Dorsolateral prefrontal cortex (tissue), 120 donors: ENCODE measurements at regions of chr1 and their contacts with region 1.

Region 1: DNA sequence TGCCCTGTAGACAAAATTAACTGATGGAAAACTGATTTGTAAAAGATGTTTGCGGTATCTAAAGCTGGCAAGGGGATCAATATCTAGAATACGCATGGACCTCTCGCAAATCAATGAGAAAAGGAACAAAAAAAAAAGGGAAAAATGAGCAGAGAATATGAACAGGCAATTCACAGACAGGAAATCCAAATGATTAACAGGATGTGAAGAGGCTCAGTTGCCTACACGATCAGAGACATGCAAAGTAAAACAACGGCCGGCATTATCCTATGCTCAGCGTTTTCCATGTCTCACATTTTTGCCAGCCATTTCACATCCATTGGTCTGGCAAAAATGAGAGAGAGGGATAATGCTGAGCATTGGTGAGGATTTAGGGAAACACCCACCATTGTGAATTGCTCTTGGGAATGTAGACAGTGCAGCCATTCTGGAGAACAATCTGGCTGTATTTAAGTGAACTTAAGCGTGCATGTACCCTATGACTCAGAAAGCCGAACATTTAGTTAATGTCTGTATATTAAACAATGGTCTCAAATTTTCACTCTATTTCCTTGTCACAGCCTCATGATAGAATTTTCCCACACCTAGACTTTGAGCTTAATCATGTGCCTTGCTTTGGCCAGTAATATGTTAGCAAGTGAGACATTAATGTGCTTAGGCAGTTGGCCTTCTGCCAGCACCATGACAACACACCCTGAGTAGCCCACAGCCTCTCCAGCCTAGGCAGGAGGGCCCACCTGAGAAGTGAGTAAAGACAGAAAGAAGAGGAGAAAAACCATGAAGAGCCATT is 61.0 kb upstream of the NBPF3 start:
- DNase-seq: no peak
- H3K4me3 ChIP-seq: no peak overlapping the region
- H3K27ac ChIP-seq: no peak overlapping the region
- H3K27me3 ChIP-seq: peaks cover 0 to 5% (median 0%) of the 10 kb centered on the region in 45 donors
- CTCF ChIP-seq: no peak

Region 2: DNA sequence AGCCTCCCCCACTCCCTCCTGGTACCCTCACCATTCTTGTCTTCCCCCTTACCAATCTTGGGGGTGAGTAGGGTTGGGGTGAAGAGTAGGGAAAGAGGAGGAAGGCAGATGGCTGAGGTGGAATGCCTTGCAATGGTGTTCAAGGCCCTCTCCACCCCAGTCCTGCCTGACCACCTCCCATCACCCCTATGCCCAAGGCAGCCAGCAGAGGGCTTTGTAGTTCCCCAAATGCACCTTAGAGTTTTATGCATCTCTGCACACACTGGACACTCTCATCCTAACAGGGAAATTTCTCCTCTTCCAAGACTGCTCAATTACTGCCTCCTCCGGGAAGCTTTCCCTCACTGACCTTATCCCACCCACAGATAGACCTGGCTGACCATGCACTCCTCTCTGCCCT is 676.5 kb before region 1 on chr1:
- intact Hi-C with region 1: loop called in 1 of 2 experiments (anchors 10 kb)
- DNase-seq: no peak
- H3K4me3 ChIP-seq: no peak overlapping the region
- H3K27ac ChIP-seq: no peak overlapping the region
- H3K27me3 ChIP-seq: no peaks in the 10 kb centered on the region
- CTCF ChIP-seq: peak in 16 of 56 donors; percentile 12 to 35 (median 18)

Region 3: GRCh38 chr1:21573971-21574465 is 195.1 kb after region 1 on chr1:
- intact Hi-C with region 1: loop called in 1 of 2 experiments (anchors 5 kb)
- DNase-seq: peak in 5 of 10 donors; percentile 59 to 81 (median 69)
- H3K4me3 ChIP-seq: no peak overlapping the region
- H3K27ac ChIP-seq: peak overlapping the region in 22 of 59 donors; percentile 0 to 76 (median 42)
- H3K27me3 ChIP-seq: no peaks in the 10 kb centered on the region
- CTCF ChIP-seq: peak in 55 of 56 donors; percentile 20 to 72 (median 54)

Region 4: GRCh38 chr1:21963477-21964217 is 584.7 kb after region 1 on chr1:
- intact Hi-C with region 1: loop called in 1 of 2 experiments (anchors 10 kb)
- DNase-seq: peak; percentile 39 to 87 (median 74)
- H3K4me3 ChIP-seq: no peak overlapping the region
- H3K27ac ChIP-seq: no peak overlapping the region
- H3K27me3 ChIP-seq: no peaks in the 10 kb centered on the region
- CTCF ChIP-seq: peak; percentile 74 to 98 (median 93)